HCT116 (cell line): ENCODE measurements at regions of chr10 and their contacts with region 1.

Region 1: DNA sequence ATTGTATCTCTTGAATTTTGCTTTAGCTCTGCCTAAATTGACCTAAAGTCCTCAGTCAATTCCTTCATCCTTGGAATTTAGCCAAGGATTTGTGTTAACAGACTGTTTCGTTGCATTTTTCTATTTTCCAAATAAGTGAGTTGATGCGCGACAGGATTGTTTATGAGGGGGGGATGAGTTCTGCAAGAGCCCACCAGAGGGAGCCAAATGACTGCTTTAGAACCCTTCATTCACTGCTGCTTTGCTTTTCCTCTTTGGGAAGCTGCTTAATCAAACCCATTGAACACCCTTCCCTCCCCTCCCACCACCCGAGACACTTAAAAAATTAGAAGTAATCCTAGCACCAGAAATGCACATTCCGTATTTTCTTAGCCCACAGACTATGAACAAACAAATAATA is 33.7 kb upstream of the PTF1A start:
- DNase-seq: peak; percentile 47
- ATAC-seq: peak; percentile 92
- H3K4me3 ChIP-seq: no peak overlapping the region
- H3K27ac ChIP-seq: no peak overlapping the region
- H3K4me1 ChIP-seq: peaks cover 0 to 10% of the 10 kb centered on the region in 2 experiments; a peak in 2 of 4 replicates
- H3K27me3 ChIP-seq: peaks cover 4% of the 10 kb centered on the region; the same call in 1 of the 2 replicates
- CTCF ChIP-seq: peak; percentile 71 to 84 (median 83)
- POLR2A ChIP-seq: no peak
- RAD21 ChIP-seq: peak; percentile 85

Region 2: DNA sequence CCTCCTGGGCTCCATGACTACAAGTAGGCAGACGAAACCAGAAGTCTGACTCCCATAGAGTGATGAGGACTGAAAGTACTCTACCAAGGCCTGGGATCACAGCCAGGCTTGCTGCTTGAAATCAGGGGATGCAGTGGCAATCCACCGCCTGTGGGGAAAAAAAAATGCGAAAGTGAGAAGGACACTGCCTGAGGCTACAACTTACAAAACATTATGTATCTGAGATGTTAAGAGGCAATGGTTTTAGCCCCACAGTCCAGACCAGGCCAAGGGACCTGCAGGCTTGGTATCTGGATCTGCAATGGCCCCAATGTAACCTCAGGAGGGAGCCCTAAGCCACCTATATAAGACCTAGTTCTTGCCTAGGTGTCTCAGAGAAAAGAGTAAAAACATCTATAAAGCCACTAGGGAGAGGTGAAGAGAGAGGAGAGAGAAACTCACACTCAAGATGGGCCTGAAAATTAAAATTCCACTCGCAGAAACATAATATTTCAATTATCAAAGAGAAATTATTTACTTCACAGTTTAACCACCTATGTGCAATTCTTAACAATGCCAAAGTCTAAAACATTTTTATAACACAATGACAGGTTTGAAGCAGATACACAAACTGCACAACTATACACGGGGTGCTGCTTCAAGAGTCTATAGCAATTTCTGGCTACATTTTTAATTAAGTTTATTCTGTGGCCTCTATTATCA is 1168.8 kb before region 1 on chr10:
- CTCF ChIA-PET with region 1: interaction called, 4 read pairs
- POLR2A ChIA-PET with region 1: no interaction called
- RAD21 ChIA-PET with region 1: no interaction called
- intact Hi-C with region 1: loop called (anchors 2 kb)
- DNase-seq: peak; percentile 52
- ATAC-seq: peak; percentile 99
- H3K4me3 ChIP-seq: no peak overlapping the region
- H3K27ac ChIP-seq: no peak overlapping the region
- H3K4me1 ChIP-seq: no peaks in the 10 kb centered on the region
- H3K27me3 ChIP-seq: no peaks in the 10 kb centered on the region
- CTCF ChIP-seq: peak; percentile 50 to 71 (median 71); a peak in 5 of 6 replicates
- POLR2A ChIP-seq: no peak
- RAD21 ChIP-seq: peak; percentile 69

Region 3: DNA sequence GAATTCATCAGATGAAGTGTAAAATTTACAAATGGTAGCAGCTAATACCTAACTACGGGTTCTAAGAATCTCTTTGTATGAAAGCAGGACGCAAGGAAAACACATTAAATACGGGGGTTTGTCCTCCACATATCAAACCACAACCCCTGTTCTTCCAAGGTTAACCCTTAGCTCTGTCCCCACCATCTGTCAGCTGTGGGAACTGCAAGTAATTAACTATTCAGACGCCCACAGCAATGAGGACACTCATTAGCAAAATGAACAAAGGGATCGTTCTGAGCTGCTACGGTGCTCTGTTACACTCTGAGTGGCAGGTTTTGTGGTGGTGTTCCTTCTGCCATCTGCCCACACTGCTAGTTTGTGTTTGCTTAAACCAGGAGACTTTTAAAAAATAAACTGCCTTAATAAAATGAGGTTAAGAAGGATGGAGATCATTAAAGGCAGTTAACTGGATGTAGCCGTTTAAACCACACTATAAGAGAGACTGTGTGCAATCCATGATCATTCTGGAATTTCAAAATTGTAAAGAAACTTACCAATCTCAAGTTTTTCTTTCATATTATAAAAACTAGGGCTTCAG is 134.9 kb after region 1 on chr10:
- CTCF ChIA-PET with region 1: interaction called, 78 read pairs
- POLR2A ChIA-PET with region 1: no interaction called
- RAD21 ChIA-PET with region 1: interaction called, 3 read pairs
- intact Hi-C with region 1: loop called (anchors 1 kb)
- DNase-seq: peak; percentile 33
- ATAC-seq: peak; percentile 94
- H3K4me3 ChIP-seq: no peak overlapping the region
- H3K27ac ChIP-seq: no peak overlapping the region
- H3K4me1 ChIP-seq: no peaks in the 10 kb centered on the region
- H3K27me3 ChIP-seq: peaks cover 12% of the 10 kb centered on the region
- CTCF ChIP-seq: peak; percentile 60 to 68 (median 67)
- POLR2A ChIP-seq: no peak
- RAD21 ChIP-seq: peak; percentile 73

Region 4: DNA sequence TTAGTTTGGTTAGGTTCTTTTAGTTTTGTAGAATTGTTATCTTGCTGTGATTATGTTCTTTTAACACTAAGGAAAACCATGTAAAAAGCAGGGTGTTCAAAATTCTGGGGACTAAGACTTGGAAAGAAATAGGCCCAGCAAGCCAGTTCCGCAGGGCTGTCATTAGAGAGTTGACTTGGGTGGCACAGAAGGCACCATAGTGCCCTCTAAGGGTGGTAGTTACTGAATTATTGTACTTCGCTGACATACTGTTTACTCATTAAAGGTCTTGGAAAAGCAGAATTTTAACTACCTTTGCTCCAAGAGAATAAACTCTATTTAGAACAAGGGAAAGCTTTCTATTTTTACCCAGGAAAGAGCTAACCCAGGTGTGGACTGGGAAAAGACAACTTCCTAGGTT is 367.0 kb after region 1 on chr10:
- CTCF ChIA-PET with region 1: interaction called, 12 read pairs
- POLR2A ChIA-PET with region 1: no interaction called
- RAD21 ChIA-PET with region 1: no interaction called
- intact Hi-C with region 1: loop called (anchors 2 kb)
- DNase-seq: no peak
- ATAC-seq: peak; percentile 83
- H3K4me3 ChIP-seq: no peak overlapping the region
- H3K27ac ChIP-seq: no peak overlapping the region
- H3K4me1 ChIP-seq: no peaks in the 10 kb centered on the region
- H3K27me3 ChIP-seq: peaks cover 9% of the 10 kb centered on the region; the same call in 1 of the 2 replicates
- CTCF ChIP-seq: peak; percentile 44 to 48 (median 45); a peak in 5 of 6 replicates
- POLR2A ChIP-seq: no peak
- RAD21 ChIP-seq: peak; percentile 67

Region 5: DNA sequence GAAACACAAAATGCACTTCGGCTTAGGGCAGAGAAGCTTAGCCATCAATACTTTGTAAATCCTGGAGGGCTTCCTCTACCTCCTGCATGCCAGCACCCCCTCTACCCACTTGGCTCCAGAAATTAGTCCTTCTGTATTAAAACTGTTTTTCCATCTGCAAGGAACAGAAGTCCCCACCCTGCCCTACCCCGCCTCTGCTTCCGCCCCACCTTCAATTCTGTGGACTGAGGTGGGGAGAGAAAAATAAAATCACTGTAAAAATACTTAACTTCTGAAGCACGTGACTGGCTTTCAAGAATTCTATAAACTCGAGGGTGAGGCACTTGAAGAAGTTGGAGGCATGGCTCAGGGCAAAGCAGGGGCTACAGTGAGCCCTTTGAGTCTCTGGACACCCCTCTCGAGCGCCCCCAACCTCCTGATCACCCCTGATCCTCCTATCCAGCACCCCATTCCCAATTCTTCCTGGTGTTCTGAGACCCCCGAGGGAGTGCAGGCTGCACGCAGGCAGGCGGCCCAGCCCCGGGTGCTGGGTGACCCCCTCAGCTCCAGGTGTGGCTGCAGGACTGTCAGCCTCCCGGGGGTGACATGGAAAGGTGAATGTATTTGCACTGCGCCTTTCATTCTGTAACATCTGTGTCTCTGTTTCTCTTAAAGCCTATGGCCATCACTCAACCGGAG is 1043.3 kb after region 1 on chr10:
- CTCF ChIA-PET with region 1: no interaction called
- POLR2A ChIA-PET with region 1: no interaction called
- RAD21 ChIA-PET with region 1: no interaction called
- intact Hi-C with region 1: loop called (anchors 1 kb)
- DNase-seq: no peak
- ATAC-seq: no peak
- H3K4me3 ChIP-seq: no peak overlapping the region
- H3K27ac ChIP-seq: no peak overlapping the region
- H3K4me1 ChIP-seq: no peaks in the 10 kb centered on the region
- H3K27me3 ChIP-seq: 0 out of 2 replicates have a peak, but pooled peaks cover 2% of the 10 kb centered on the region
- CTCF ChIP-seq: no peak
- POLR2A ChIP-seq: no peak
- RAD21 ChIP-seq: no peak

Region 6: DNA sequence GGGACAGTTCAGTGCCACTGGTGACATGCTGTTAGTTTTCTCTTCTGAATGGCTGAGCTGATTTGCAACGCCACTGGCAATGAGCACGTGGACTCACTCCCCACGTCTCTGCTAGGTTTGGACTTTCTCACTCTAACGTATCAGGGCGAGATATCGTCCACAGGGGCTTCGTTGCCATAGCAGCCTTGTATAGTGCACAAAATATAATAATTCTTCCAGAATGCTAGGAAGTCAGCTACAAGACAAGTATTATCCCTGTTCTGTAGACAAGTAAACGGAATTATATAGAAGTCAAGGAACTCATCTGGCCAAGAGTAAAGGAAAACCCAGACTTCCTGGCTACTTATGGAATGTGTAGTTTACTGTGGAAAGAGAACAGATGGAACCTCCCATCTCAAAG is 1338.5 kb after region 1 on chr10:
- CTCF ChIA-PET with region 1: no interaction called
- POLR2A ChIA-PET with region 1: no interaction called
- RAD21 ChIA-PET with region 1: no interaction called
- intact Hi-C with region 1: no loop called
- DNase-seq: no peak
- ATAC-seq: no peak
- H3K4me3 ChIP-seq: no peak overlapping the region
- H3K27ac ChIP-seq: no peak overlapping the region
- H3K4me1 ChIP-seq: no peaks in the 10 kb centered on the region
- H3K27me3 ChIP-seq: no peaks in the 10 kb centered on the region
- CTCF ChIP-seq: no peak
- POLR2A ChIP-seq: no peak
- RAD21 ChIP-seq: no peak

Region 7: GRCh38 chr10:24518981-24519597 is 1360.7 kb after region 1 on chr10:
- CTCF ChIA-PET with region 1: no interaction called
- POLR2A ChIA-PET with region 1: no interaction called
- RAD21 ChIA-PET with region 1: no interaction called
- intact Hi-C with region 1: loop called (anchors 5 kb)
- DNase-seq: peak; percentile 23
- ATAC-seq: peak; percentile 86
- H3K4me3 ChIP-seq: no peak overlapping the region
- H3K27ac ChIP-seq: no peak overlapping the region
- H3K4me1 ChIP-seq: peaks cover 0 to 3% of the 10 kb centered on the region in 2 experiments; a peak in 1 of 4 replicates
- H3K27me3 ChIP-seq: no peaks in the 10 kb centered on the region
- CTCF ChIP-seq: peak; percentile 53 to 84 (median 73); a peak in 5 of 6 replicates
- POLR2A ChIP-seq: no peak
- RAD21 ChIP-seq: peak; percentile 80